ENCODE measurements at regions of chr9 and their contacts with region 1.

Region 1: GRCh38 chr9:36995927-36996705 is 38.0 kb downstream of the PAX5 start:
- DNase-seq: peak; percentile 20 to 65 (median 40)
- ATAC-seq: peak in 3 of 4 donors; percentile 75 to 82 (median 77)
- H3K4me3 ChIP-seq: peak overlapping the region in 2 of 12 donors; percentile 16 to 33
- H3K27ac ChIP-seq: no peak overlapping the region
- H3K4me1 ChIP-seq: peaks cover 0 to 4% (median 0%) of the 10 kb centered on the region in 12 donors
- H3K27me3 ChIP-seq: peaks cover 0 to 72% (median 25%) of the 10 kb centered on the region in 9 donors
- CTCF ChIP-seq: peak; percentile 15 to 58 (median 46)
- POLR2A ChIP-seq: no peak

Region 2: GRCh38 chr9:37040508-37041127 is 44.5 kb after region 1 on chr9:
- intact Hi-C with region 1: loop called in 1 of 10 experiments (anchors 5 kb)
- DNase-seq: no peak
- ATAC-seq: no peak
- H3K4me3 ChIP-seq: no peak overlapping the region
- H3K27ac ChIP-seq: no peak overlapping the region
- H3K4me1 ChIP-seq: peaks cover 4 to 27% (median 20%) of the 10 kb centered on the region in 12 donors
- H3K27me3 ChIP-seq: peaks cover 43 to 98% (median 75%) of the 10 kb centered on the region in 9 donors
- CTCF ChIP-seq: no peak
- POLR2A ChIP-seq: no peak

Region 3: DNA sequence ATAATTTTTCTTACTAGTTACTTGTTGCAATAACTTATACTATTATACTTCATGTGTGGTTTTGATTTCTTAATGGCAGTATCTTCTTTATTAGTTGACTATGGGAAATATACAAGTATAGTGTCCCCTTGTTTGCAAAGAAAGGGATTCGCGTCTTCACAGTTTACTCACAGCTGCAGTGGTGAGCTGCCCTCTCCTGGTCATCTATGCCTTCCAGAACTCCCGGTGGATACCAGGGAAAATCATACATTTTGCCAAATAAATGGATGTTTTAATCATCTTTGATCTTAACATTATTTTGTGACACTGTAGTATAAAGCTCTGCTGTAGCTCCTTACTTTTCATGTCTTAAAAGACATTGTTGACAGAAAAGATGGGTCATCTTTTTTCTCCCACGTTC is 266.3 kb after region 1 on chr9:
- intact Hi-C with region 1: loop called in 4 of 10 experiments (anchors 5 to 10 kb)
- DNase-seq: no peak
- ATAC-seq: no peak
- H3K4me3 ChIP-seq: no peak overlapping the region
- H3K27ac ChIP-seq: no peak overlapping the region
- H3K4me1 ChIP-seq: no peaks in the 10 kb centered on the region
- H3K27me3 ChIP-seq: no peaks in the 10 kb centered on the region
- CTCF ChIP-seq: peak in 11 of 12 donors; percentile 10 to 53 (median 35)
- POLR2A ChIP-seq: no peak

Measured in heart left ventricle (tissue), 16 donors.